RWPE1 (cell line): ENCODE measurements at regions of chr1 and their contacts with region 1.

Region 1: GRCh38 chr1:18907021-18907916 is 4.9 kb upstream of the ALDH4A1 start:
- DNase-seq: peak; percentile 55
- H3K27ac ChIP-seq: peak overlapping the region; percentile 68
- CTCF ChIP-seq: peak; percentile 88

Region 2: DNA sequence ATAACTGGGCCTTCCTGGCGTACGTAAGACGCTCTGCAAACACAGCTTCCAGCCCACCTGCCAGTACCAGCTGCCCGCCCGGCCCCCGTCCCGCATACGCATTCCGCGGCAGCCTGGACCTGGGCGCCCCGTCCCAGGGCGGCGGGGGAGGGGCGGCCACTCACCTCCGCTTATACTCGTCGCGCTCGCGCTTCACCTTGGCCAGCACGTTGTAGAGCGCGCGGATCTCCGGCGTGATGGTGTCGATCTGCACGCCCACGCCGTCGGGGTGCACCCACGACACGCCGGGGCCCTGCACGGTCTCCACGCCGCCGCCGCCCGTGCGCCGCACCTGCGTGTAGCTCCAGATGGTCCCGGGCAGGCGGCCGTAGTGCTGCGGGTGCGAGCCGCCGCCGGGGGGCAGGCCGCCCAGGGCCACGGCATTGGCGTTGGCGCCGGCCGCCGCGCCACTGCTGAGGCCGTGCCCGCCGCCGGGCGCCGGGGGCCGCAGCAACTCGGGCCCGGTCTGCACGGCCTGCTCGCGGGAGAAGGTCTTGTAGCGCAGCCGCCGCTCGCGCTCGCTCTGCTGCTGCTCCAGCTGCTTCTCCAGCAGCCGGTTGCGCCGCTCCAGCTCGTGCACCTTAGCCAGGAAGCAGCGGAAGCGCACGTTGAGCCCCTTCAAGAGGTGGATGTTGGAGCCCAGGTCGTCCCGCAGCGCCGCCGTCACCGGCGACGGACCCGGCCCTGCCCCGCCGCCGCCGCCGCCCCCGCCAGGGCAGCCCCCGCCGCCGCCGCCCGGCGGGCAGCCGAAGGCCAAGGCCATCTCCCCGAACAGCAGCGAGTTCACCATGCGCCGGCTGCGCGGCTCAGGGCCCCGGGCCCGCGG is 48.5 kb after region 1 on chr1:
- CTCF ChIA-PET with region 1: interaction called, 13 read pairs
- POLR2A ChIA-PET with region 1: no interaction called
- DNase-seq: peak; percentile 31
- H3K27ac ChIP-seq: peak overlapping the region; percentile 82
- CTCF ChIP-seq: peak; percentile 28; the same call in 1 of the 2 replicates

Region 3: GRCh38 chr1:19074902-19075721 is 167.8 kb after region 1 on chr1:
- CTCF ChIA-PET with region 1: interaction called, 10 read pairs
- POLR2A ChIA-PET with region 1: no interaction called
- DNase-seq: peak; percentile 91
- H3K27ac ChIP-seq: peak overlapping the region; percentile 99
- CTCF ChIP-seq: no peak